ENCODE measurements at regions of chr19 and their contacts with region 1.

Region 1: GRCh38 chr19:47256688-47257443 is 541 bp downstream of the CCDC9 start:
- DNase-seq: peak; percentile 100
- H3K4me3 Mint-ChIP-seq: peak overlapping the region; percentile 96
- H3K27ac Mint-ChIP-seq: peak overlapping the region; percentile 94
- H3K4me1 Mint-ChIP-seq: peaks cover 40% of the 10 kb centered on the region
- H3K27me3 Mint-ChIP-seq: peaks cover 2% of the 10 kb centered on the region

Region 2: DNA sequence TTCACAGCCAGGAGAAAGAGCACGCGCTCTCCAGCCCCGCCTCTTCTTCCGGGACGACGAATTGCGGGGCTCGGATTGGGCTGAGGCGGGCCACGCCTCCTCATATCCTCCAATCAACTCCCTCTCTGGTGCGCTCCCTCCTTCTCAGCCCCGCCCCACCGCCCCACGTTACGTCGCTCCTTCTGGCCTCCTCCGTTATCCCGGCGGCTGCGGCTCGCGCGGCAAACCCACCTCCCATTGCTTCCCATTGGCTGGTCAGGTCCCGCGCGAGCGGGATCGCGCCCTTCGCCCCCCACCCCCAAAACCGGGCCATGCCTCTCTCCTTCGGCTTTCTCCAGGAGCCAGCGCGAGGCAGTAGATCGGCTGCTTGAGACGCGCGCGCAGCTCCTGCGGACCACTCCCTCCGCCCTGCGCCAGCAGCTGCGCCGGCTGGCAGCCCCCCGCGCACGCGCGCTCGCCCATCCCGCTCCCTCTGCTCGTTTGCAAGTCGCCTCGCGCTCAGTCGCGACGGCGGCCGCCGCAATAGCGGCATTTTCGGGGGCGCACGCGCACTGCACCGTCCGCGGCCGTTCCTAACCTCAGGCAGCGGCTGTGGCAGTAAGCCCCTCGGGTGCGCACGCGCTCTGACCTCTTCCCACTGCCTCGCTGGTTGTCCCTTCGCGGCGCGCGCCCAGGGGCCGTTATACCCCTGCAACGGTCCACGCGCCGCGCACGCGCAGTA is 396.6 kb before region 1 on chr19:
- intact Hi-C with region 1: loop called (anchors 2 kb)
- DNase-seq: peak; percentile 99
- H3K4me3 Mint-ChIP-seq: peak overlapping the region; percentile 85
- H3K27ac Mint-ChIP-seq: peak overlapping the region; percentile 91
- H3K4me1 Mint-ChIP-seq: peaks cover 19% of the 10 kb centered on the region
- H3K27me3 Mint-ChIP-seq: no peaks in the 10 kb centered on the region

Region 3: GRCh38 chr19:47047763-47048405 is 209.0 kb before region 1 on chr19:
- intact Hi-C with region 1: loop called (anchors 2 kb)
- DNase-seq: peak; percentile 93
- H3K4me3 Mint-ChIP-seq: peak overlapping the region; percentile 98
- H3K27ac Mint-ChIP-seq: peak overlapping the region; percentile 93
- H3K4me1 Mint-ChIP-seq: peaks cover 18% of the 10 kb centered on the region
- H3K27me3 Mint-ChIP-seq: peaks cover 2% of the 10 kb centered on the region

Region 4: DNA sequence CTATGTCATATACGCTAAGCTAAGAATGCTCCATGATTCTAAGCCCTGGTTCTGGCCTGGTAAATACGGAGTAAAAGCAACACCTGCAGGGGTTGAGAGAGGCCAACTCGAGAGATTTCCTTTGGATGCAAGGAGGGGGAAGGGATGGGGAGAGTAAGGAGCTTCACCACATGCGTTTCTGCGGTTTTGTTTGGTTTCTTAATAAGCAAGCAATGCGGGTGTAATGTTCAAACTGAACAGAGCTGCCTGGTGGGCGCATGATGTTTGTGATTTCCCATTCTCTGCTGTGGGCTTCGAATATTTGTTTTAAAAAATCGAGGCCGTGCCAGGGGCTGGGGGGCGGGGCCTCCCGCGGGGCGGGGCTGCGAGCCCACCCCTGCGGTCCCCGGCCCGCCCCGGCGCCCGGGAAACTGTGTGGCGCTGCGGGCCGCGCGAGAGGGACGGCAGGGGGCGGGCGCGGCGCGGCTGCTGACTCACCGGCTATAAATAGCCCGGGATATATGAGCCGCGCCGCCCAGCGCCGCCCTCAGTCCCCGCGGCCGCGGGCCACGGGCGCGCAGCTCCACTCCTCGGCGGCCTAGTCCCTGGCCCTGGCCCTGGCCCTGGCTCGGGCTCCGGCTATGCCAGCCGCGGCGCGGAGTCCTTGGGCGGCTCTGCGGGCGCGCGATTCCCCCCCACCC is 31.0 kb before region 1 on chr19:
- intact Hi-C with region 1: loop called (anchors 1 kb)
- DNase-seq: peak; percentile 96
- H3K4me3 Mint-ChIP-seq: peak overlapping the region; percentile 88
- H3K27ac Mint-ChIP-seq: peak overlapping the region; percentile 92
- H3K4me1 Mint-ChIP-seq: peaks cover 13% of the 10 kb centered on the region
- H3K27me3 Mint-ChIP-seq: no peaks in the 10 kb centered on the region

Region 5: GRCh38 chr19:47231215-47231984 is 25.5 kb before region 1 on chr19:
- intact Hi-C with region 1: loop called (anchors 1 kb)
- DNase-seq: peak; percentile 98
- H3K4me3 Mint-ChIP-seq: peak overlapping the region; percentile 84
- H3K27ac Mint-ChIP-seq: peak overlapping the region; percentile 87
- H3K4me1 Mint-ChIP-seq: peaks cover 23% of the 10 kb centered on the region
- H3K27me3 Mint-ChIP-seq: peaks cover 2% of the 10 kb centered on the region

Region 6: DNA sequence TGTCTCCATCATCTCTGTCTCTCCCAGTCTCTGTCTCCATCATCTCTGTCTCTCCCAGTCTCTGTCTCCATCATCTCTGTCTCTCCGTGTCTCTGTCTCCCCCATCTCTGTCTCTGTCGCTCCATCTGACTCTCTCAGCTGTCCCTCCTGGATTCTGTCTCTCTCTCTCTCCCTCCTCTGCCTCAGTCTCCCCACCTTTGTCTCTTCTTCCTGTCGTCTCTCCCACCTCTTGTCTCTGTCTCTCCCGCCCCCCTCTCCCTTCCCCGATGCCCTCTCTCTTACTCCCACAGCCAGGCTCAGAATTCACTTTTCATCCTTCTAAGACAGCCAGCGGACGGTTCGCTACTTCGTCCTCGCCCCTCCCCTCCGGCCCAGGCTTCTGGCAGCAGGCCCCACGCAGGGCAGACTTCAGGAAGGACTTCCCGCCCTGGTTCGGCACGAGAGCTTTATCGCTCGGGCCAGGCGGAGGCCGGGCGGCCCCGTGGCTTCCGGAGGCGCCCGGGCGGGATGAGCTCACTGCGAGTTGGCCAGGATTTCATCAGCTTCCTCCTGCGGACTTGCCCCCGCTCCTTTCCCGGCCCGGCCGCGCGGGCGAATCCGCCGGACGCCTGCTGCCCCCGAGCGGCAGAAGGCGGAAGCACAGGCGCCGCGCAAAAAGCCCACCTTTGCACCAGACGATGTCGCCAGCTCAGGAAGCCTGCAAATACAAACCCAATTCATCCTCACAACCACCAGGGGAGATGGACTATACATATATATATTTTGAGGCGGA is 12.9 kb before region 1 on chr19:
- intact Hi-C with region 1: no loop called
- DNase-seq: peak; percentile 98
- H3K4me3 Mint-ChIP-seq: peak overlapping the region; percentile 85
- H3K27ac Mint-ChIP-seq: peak overlapping the region; percentile 97
- H3K4me1 Mint-ChIP-seq: peaks cover 25% of the 10 kb centered on the region
- H3K27me3 Mint-ChIP-seq: peaks cover 1% of the 10 kb centered on the region

Region 7: DNA sequence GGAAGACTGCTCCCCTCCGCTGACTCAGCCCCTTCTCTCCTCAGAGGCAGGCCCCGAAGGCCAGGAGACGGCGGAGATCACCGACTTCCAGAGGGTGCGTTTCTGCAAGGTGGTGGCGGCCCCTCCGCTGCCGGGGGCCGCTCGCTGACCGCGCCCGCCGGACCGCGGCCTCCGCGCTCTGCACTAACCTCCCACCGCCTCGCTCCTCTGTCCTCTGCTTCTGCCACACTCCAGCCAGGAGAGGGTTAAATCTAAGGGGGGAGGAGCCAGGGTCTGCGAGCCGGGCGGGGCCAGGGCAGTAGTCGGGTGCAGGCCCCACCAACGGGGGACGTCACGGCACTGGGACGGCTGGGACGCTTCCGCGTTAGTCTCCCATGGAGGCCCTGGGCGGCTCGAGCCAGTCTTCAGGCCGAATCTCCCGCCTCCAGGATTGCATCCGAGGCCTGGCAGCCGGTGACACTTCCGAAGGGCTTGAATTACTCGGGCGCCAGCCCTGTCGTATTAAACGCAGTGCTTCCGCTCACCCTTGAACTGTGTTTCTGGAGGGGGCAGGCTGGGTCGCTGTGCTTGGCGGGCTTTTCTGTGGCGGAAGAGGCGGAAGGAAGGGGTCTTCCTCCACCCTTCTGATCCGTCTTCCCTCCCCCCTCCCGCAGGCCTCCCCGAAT is 16.6 kb after region 1 on chr19:
- intact Hi-C with region 1: loop called (anchors 1 kb)
- DNase-seq: peak; percentile 98
- H3K4me3 Mint-ChIP-seq: peak overlapping the region; percentile 97
- H3K27ac Mint-ChIP-seq: peak overlapping the region; percentile 99
- H3K4me1 Mint-ChIP-seq: peaks cover 41% of the 10 kb centered on the region
- H3K27me3 Mint-ChIP-seq: no peaks in the 10 kb centered on the region